ENCODE measurements at regions of chr17 and their contacts with region 1.

Region 1: GRCh38 chr17:73710095-73710592 is 65.9 kb upstream of the SDK2 start:
- DNase-seq: peak in 34 of 35 experiments; percentile 9 to 83 (median 48)
- ATAC-seq: peak; percentile 60 to 71 (median 67)
- H3K4me3 ChIP-seq: no peak overlapping the region
- H3K4me3 Mint-ChIP-seq: no peak overlapping the region
- H3K27ac ChIP-seq: no peak overlapping the region
- H3K27ac Mint-ChIP-seq: peak overlapping the region in 1 of 2 donors; percentile 18
- H3K4me1 ChIP-seq: peaks cover 0 to 17% of the 10 kb centered on the region in 2 experiments
- H3K4me1 Mint-ChIP-seq: peaks cover 12 to 21% (median 14%) of the 10 kb centered on the region in 3 donors
- H3K27me3 ChIP-seq: peaks cover 0 to 27% of the 10 kb centered on the region in 2 experiments
- H3K27me3 Mint-ChIP-seq: peaks cover 6 to 9% of the 10 kb centered on the region in 2 donors

Region 2: GRCh38 chr17:73429440-73430164 is 280.5 kb before region 1 on chr17:
- CTCF ChIA-PET with region 1: interaction called, 16 to 20 read pairs
- POLR2A ChIA-PET with region 1: no interaction called
- DNase-seq: peak; percentile 53 to 93 (median 82)
- ATAC-seq: peak; percentile 92 to 95 (median 94)
- H3K4me3 ChIP-seq: no peak overlapping the region
- H3K4me3 Mint-ChIP-seq: peak overlapping the region in 1 of 3 donors; percentile 42
- H3K27ac ChIP-seq: no peak overlapping the region
- H3K27ac Mint-ChIP-seq: peak overlapping the region in 1 of 2 donors; percentile 11
- H3K4me1 ChIP-seq: peaks cover 0 to 7% of the 10 kb centered on the region in 2 experiments
- H3K4me1 Mint-ChIP-seq: peaks cover 7 to 17% (median 10%) of the 10 kb centered on the region in 3 donors
- H3K27me3 ChIP-seq: peaks cover 0 to 8% of the 10 kb centered on the region in 2 experiments
- H3K27me3 Mint-ChIP-seq: no peaks in the 10 kb centered on the region

Measured in T-cell (primary cell).